Activated B cell treated with CpG ODN at 0.5 μM for 24 hours (primary cell): ENCODE measurements at regions of chr1 and their contacts with region 1.

Region 1: GRCh38 chr1:15526490-15527339 is at the start of gene DNAJC16:
- DNase-seq: peak; percentile 90
- ATAC-seq: peak; percentile 33
- H3K4me3 Mint-ChIP-seq: peak within 1 kb of the TSS; percentile 87
- H3K27ac Mint-ChIP-seq: peak within 1 kb of the TSS; percentile 99
- H3K4me1 Mint-ChIP-seq: peaks cover 49% of the 10 kb centered on the region
- H3K27me3 Mint-ChIP-seq: no peaks in the 10 kb centered on the region
- CTCF ChIP-seq: no peak
- total RNA-seq, gene DNAJC16: 35.5 and 35.9 TPM in 2 replicates

Region 2: DNA sequence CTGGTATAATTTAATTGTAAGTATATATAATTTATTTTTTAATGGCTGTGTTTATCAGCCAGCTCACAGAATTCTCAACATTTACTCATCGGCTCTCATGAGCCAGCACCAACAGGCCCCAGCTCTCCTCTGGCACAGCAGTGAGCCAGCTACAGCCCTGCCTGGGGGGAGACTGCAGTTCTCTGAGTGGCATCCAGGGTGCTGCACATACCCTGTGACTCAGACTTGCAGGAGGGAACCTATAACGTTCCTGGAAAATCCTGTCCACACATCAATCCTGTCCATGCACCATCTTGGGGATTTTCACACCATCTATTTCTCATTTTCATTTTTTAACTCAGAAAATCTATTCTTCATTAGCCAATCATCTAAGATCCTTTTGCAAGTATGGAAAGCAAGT is 243.2 kb before region 1 on chr1:
- CTCF ChIA-PET with region 1: no interaction called
- POLR2A ChIA-PET with region 1: no interaction called
- intact Hi-C with region 1: no loop called
- DNase-seq: no peak
- ATAC-seq: no peak
- H3K4me3 Mint-ChIP-seq: no peak overlapping the region
- H3K27ac Mint-ChIP-seq: no peak overlapping the region
- H3K4me1 Mint-ChIP-seq: no peaks in the 10 kb centered on the region
- H3K27me3 Mint-ChIP-seq: peaks cover 10% of the 10 kb centered on the region
- CTCF ChIP-seq: no peak

Region 3: GRCh38 chr1:15332952-15333715 is 193.6 kb before region 1 on chr1:
- CTCF ChIA-PET with region 1: no interaction called
- POLR2A ChIA-PET with region 1: interaction called, 12 read pairs
- intact Hi-C with region 1: no loop called
- DNase-seq: no peak
- ATAC-seq: no peak
- H3K4me3 Mint-ChIP-seq: no peak overlapping the region
- H3K27ac Mint-ChIP-seq: no peak overlapping the region
- H3K4me1 Mint-ChIP-seq: no peaks in the 10 kb centered on the region
- H3K27me3 Mint-ChIP-seq: peaks cover 20% of the 10 kb centered on the region
- CTCF ChIP-seq: no peak

Region 4: DNA sequence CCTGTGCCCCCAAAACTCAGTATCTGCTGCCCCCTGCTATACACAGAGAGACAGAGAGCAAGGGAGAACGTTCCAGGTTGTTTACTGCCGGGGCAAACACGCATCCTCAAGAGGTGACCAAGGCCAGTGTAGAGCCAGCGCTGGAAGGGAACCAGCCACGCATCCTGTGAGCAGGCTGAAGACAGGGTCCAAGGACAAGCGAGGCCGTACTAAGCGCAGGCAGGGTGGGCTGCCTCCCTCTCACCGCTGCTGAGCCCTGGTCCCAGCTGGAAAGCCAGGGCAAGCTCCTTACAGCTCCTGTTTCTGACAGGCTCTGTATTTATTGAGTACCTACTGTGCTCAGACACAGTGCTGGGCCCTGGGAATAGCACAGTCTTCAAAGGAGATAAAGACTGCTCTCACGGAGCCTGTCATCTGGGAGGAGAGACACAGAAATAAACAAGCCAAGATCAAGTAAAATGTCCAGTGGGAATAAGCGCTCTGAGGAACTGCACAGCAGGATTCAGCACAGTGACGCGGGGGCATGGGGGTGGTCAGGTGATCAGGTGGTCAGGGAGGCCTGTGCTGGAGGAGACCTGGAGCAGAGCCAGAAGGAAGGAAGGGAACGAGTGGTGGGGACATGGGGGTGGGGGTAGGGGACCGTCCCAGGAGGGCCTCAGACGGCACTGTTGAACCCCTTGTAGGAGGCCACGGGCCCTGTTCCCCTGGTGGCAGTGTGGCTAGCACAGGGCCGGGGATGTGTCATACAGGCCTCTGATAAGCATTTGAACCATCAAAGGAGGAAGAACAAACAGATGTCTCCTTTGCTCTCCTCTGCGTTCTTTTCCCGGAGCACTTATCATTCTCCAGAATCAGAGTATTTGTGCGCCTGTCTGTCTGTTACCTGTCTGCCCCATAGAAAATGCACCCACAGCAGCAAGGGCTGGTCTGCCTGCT is 154.8 kb before region 1 on chr1:
- CTCF ChIA-PET with region 1: no interaction called
- POLR2A ChIA-PET with region 1: no interaction called
- intact Hi-C with region 1: no loop called
- DNase-seq: no peak
- ATAC-seq: no peak
- H3K4me3 Mint-ChIP-seq: no peak overlapping the region
- H3K27ac Mint-ChIP-seq: no peak overlapping the region
- H3K4me1 Mint-ChIP-seq: no peaks in the 10 kb centered on the region
- H3K27me3 Mint-ChIP-seq: peaks cover 11% of the 10 kb centered on the region
- CTCF ChIP-seq: no peak

Region 5: GRCh38 chr1:15584489-15585363 is 58.0 kb after region 1 on chr1 and contains the start of gene AGMAT:
- CTCF ChIA-PET with region 1: no interaction called
- POLR2A ChIA-PET with region 1: interaction called, 3 read pairs
- intact Hi-C with region 1: loop called (anchors 1 kb)
- DNase-seq: peak; percentile 64
- ATAC-seq: peak; percentile 87
- H3K4me3 Mint-ChIP-seq: peak within 1 kb of the TSS; percentile 82
- H3K27ac Mint-ChIP-seq: peak within 1 kb of the TSS; percentile 81
- H3K4me1 Mint-ChIP-seq: peaks cover 19% of the 10 kb centered on the region
- H3K27me3 Mint-ChIP-seq: no peaks in the 10 kb centered on the region
- CTCF ChIP-seq: no peak
- total RNA-seq, gene AGMAT: 8.1 TPM in 2 replicates

Region 6: DNA sequence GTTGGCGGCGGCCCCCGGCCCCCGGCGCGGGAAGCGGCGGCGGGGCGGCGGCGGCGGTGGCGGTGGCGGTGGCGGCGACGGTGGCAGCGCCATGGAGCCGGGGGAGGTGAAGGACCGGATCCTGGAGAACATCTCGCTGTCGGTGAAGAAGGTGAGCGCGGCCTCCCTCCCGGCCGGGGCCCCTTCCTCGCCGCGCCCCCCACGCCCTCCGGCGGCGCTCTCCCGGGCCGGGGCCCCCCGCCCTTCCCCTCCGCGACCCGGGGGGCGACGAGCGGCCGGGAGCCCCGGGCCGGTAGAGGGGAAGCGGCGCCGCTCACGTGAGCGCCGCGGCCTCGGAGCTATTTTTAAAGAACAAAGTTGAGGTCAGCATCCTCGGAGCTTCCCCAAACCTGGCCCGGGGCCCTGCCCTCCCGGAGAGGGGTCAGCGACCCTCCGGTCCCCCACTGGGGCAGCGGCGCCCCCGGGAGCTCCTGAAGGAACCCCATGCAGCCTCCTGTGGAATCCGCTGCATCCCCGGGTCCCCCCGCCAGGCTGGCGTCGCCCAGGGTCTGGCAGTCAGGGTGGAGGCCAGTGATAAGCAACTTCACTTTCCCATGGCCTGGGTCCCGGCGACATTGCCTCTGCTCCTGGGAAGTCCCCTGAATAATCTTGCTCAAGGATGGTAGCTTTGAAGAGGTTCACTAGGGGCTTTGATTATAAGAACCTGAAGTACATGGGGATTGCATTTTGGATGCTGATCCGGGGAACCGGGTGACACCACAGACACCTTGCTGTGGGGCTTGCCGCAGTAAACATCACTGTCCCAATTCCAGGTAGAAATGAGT is 158.0 kb after region 1 on chr1:
- CTCF ChIA-PET with region 1: no interaction called
- POLR2A ChIA-PET with region 1: interaction called, 8 read pairs
- intact Hi-C with region 1: loop called (anchors 2 kb)
- DNase-seq: peak; percentile 46
- ATAC-seq: peak; percentile 6
- H3K4me3 Mint-ChIP-seq: peak overlapping the region; percentile 88
- H3K27ac Mint-ChIP-seq: peak overlapping the region; percentile 81
- H3K4me1 Mint-ChIP-seq: peaks cover 70% of the 10 kb centered on the region
- H3K27me3 Mint-ChIP-seq: no peaks in the 10 kb centered on the region
- CTCF ChIP-seq: no peak

Region 7: DNA sequence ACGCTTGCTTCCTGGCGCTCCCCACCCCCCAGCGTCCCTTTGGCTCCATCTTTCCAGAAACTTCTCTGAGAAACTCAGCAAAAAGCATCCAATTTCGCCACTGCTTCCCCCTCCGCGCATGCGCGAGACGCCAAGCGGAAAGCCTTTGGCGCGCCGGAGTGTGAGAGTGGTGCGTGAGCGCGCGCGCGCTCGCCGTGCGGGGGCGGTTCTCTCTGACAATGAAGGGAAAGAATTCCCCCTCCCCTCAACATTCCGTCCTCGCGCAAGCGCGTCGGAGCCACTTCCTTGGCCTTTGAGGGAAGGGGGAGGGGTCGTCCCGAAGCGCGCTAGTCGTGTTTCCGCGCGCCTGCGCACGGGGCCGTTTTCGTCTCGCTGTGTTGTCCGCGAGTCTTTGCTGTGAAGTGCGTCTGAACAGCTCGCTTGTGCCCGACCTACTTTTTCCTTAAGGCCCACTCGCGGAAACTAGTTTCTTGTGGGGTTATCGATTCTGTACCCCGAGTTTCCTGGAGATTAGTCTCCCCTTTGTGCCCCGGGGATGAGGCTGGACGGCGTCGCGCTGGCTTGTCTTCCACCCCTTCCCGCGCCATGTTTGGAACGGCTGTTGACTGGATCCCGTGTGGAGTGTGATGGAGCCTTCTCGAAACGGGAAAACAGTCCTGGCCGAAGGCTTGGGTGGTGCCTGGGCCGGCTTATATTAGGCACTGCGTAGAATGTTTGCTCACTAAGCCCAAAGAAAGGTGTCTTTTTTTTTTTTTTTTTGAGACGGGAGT is 309.2 kb after region 1 on chr1:
- CTCF ChIA-PET with region 1: no interaction called
- POLR2A ChIA-PET with region 1: no interaction called
- intact Hi-C with region 1: loop called (anchors 2 kb)
- DNase-seq: peak; percentile 96
- ATAC-seq: peak; percentile 49
- H3K4me3 Mint-ChIP-seq: peak overlapping the region; percentile 90
- H3K27ac Mint-ChIP-seq: peak overlapping the region; percentile 98
- H3K4me1 Mint-ChIP-seq: peaks cover 45% of the 10 kb centered on the region
- H3K27me3 Mint-ChIP-seq: no peaks in the 10 kb centered on the region
- CTCF ChIP-seq: no peak

Region 8: DNA sequence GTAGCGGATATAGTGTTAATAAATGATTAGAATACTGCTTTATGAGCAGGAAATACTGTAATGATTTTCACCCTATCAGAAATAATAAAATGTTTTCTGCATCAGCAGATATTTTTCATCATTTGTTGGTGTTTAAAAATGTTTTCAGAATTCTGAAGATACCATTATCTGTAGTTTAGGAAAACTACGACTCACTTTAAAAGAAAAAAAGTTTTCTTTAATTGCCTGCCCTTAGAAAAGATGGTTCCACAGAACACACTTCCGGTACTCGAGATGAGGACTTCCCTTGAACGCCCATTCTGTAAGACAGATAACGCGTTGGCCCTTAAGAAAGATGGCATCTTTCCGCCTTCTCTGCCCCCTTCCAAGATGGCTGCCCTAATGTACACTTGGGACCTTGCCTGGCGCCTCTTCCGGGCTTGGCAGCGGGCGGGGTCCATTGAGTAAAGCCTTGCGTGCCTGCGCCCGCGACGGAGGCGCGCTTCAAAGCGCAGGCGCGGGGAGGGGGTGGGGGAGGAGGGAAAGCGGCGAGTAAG is 840.1 kb after region 1 on chr1 and contains the start of gene SZRD1:
- CTCF ChIA-PET with region 1: no interaction called
- POLR2A ChIA-PET with region 1: no interaction called
- intact Hi-C with region 1: loop called (anchors 1 kb)
- DNase-seq: peak; percentile 84
- ATAC-seq: peak; percentile 83
- H3K4me3 Mint-ChIP-seq: peak within 1 kb of the TSS; percentile 99
- H3K27ac Mint-ChIP-seq: peak within 1 kb of the TSS; percentile 99
- H3K4me1 Mint-ChIP-seq: peaks cover 38% of the 10 kb centered on the region
- H3K27me3 Mint-ChIP-seq: no peaks in the 10 kb centered on the region
- CTCF ChIP-seq: no peak
- total RNA-seq, gene SZRD1: 184 and 190 TPM in 2 replicates